ENCODE measurements at regions of chr6 and their contacts with region 1.

Region 1: DNA sequence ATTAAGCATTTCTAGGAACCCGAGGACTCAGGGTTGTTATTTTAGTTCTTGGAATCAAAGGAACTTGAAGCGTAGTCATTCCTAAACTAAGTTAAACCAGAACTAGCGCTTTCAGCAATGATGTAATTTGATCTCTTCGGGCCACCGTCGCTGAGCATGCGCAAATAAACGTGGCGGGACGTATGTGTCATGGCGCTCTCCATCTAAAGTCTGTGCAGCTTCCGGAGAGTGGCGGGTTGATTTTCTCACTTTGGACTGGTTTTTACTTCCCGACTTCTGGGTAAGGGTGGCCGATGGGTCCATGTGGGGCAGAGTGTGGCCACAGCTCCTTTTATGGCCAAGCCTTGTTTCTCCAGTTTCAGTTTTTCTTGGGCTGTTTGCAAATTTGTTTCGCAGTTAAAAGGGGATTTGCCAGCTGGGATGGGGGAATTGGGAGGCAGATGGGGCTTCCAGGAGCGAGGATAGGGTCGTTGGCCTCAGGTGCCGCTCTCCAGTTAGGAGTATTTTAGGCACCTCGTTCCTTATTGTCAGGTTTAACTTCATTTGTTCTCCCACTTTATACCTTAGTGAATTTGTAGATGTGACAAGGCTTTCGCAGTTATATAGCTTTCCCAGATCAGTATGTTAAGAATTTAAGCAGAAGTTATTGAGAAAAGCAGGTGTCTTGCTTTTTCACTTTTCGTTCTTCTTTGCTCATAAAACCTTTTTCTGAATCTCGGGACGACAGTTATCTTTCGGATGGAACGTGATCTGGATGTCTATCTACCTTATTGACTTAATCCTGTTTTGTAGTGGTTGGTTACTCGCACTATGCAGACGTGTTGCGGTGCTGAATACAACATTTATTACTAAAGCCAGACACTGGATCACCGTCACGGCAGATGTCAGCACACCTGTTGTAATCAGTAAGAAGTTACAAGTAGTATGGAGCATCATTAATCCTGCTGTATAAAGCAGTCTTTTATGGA is at the start of gene CDKAL1:
- DNase-seq: peak; percentile 97
- H3K4me3 ChIP-seq: peak within 1 kb of the TSS; percentile 98
- H3K27ac ChIP-seq: peak within 1 kb of the TSS; percentile 68
- H3K4me1 ChIP-seq: no peaks in the 10 kb centered on the region
- H3K27me3 ChIP-seq: no peaks in the 10 kb centered on the region
- CTCF ChIP-seq: no peak
- total RNA-seq, gene CDKAL1: 13.8 to 14.2 TPM

Region 2: GRCh38 chr6:20092071-20092566 is 442.5 kb before region 1 on chr6:
- intact Hi-C with region 1: loop called (anchors 5 kb)
- DNase-seq: no peak
- H3K4me3 ChIP-seq: no peak overlapping the region
- H3K27ac ChIP-seq: no peak overlapping the region
- H3K4me1 ChIP-seq: no peaks in the 10 kb centered on the region
- H3K27me3 ChIP-seq: no peaks in the 10 kb centered on the region
- CTCF ChIP-seq: peak; percentile 67

Region 3: DNA sequence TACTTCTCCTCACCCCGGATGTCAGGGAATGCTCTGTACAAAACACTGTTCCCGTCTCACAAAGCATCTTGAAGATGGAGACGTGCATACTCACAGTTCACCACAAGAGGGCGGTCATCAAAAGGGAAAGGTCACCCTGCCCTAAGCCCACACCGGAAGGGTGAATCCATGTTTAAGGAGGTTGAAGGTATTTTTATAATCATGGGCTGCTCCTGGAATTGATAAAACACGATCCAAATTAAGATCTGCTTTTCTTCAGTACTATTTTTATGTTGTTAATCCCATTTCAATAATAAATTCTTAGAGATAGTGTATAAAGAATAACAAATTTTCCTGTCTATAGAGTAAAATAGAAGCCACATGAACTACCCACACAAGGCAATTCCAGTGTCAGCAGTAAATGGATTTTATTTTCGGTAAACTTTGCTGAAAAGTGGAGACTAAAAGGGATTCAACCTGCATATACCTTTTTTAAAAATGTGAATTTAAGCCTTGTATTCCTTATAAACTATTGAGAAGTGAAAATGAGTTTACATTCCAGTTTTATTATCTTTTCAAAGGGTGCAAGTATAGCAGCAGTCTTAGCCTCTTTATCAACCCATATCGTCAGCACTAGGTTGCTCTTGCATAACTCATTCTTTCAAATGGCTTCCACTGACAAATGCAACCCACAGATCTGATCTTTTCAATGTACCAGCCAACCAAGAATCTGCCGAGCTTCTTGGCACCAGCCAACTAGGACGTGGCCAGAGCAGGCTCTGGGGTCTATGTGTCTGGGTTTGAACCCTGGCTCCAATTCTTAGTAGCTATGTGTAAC is 242.6 kb before region 1 on chr6:
- intact Hi-C with region 1: loop called (anchors 2 kb)
- DNase-seq: peak; percentile 88
- H3K4me3 ChIP-seq: no peak overlapping the region
- H3K27ac ChIP-seq: no peak overlapping the region
- H3K4me1 ChIP-seq: no peaks in the 10 kb centered on the region
- H3K27me3 ChIP-seq: no peaks in the 10 kb centered on the region
- CTCF ChIP-seq: peak; percentile 95

Region 4: GRCh38 chr6:20399518-20399917 is 135.1 kb before region 1 on chr6:
- intact Hi-C with region 1: loop called (anchors 5 kb)
- DNase-seq: no peak
- H3K4me3 ChIP-seq: no peak overlapping the region
- H3K27ac ChIP-seq: no peak overlapping the region
- H3K4me1 ChIP-seq: no peaks in the 10 kb centered on the region
- H3K27me3 ChIP-seq: no peaks in the 10 kb centered on the region
- CTCF ChIP-seq: no peak

Region 5: DNA sequence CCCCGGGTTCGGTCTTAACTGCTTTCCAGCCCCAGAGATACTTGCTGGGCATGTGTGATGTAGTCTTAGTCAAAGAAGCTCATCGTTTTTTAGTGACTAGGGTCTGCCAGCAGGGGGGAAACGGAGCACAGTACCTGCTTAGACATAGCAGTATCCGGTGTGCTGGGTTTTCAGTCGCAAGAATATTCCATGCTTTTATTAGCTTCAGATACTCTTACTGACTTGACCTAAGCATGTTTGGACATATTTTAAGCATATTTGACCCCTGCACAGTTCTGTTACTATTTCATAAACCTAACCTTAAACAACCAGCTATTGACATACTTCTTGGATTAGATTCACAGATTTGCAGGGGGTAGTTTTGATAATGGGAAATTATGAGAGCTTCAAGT is 129.9 kb before region 1 on chr6:
- intact Hi-C with region 1: loop called (anchors 5 kb)
- DNase-seq: peak; percentile 56
- H3K4me3 ChIP-seq: peak overlapping the region; percentile 79
- H3K27ac ChIP-seq: peak overlapping the region; percentile 83
- H3K4me1 ChIP-seq: no peaks in the 10 kb centered on the region
- H3K27me3 ChIP-seq: no peaks in the 10 kb centered on the region
- CTCF ChIP-seq: peak; percentile 39

Measured in colonic mucosa (tissue), 4 donors.